ENCODE measurements at regions of chr2 and their contacts with region 1.

Region 1: GRCh38 chr2:218367415-218368153 is 10.9 kb downstream of the CATIP start:
- DNase-seq: peak; percentile 84
- H3K4me3 Mint-ChIP-seq: peak overlapping the region; percentile 73
- H3K27ac Mint-ChIP-seq: no peak overlapping the region
- H3K4me1 Mint-ChIP-seq: peaks cover 13% of the 10 kb centered on the region
- H3K27me3 Mint-ChIP-seq: no peaks in the 10 kb centered on the region

Region 2: GRCh38 chr2:218292048-218293014 is 75.3 kb before region 1 on chr2 and contains the start of gene TMBIM1:
- CTCF ChIA-PET with region 1: interaction called, 4 read pairs
- intact Hi-C with region 1: loop called (anchors 5 kb)
- DNase-seq: peak; percentile 75
- H3K4me3 Mint-ChIP-seq: peak within 1 kb of the TSS; percentile 78
- H3K27ac Mint-ChIP-seq: peak within 1 kb of the TSS; percentile 94
- H3K4me1 Mint-ChIP-seq: peaks cover 46% of the 10 kb centered on the region
- H3K27me3 Mint-ChIP-seq: no peaks in the 10 kb centered on the region
- total RNA-seq, gene TMBIM1: 43.1 to 43.4 TPM

Region 3: GRCh38 chr2:218319813-218320365 is 47.7 kb before region 1 on chr2:
- CTCF ChIA-PET with region 1: no interaction called
- intact Hi-C with region 1: loop called (anchors 5 kb)
- DNase-seq: no peak
- H3K4me3 Mint-ChIP-seq: no peak overlapping the region
- H3K27ac Mint-ChIP-seq: no peak overlapping the region
- H3K4me1 Mint-ChIP-seq: peaks cover 58% of the 10 kb centered on the region
- H3K27me3 Mint-ChIP-seq: peaks cover 4% of the 10 kb centered on the region

Region 4: GRCh38 chr2:218329826-218330593 is 37.6 kb before region 1 on chr2:
- CTCF ChIA-PET with region 1: no interaction called
- intact Hi-C with region 1: no loop called
- DNase-seq: no peak
- H3K4me3 Mint-ChIP-seq: no peak overlapping the region
- H3K27ac Mint-ChIP-seq: no peak overlapping the region
- H3K4me1 Mint-ChIP-seq: peaks cover 21% of the 10 kb centered on the region
- H3K27me3 Mint-ChIP-seq: no peaks in the 10 kb centered on the region